IMR-90 (cell line): ENCODE measurements at regions of chr14 and their contacts with region 1.

Region 1: DNA sequence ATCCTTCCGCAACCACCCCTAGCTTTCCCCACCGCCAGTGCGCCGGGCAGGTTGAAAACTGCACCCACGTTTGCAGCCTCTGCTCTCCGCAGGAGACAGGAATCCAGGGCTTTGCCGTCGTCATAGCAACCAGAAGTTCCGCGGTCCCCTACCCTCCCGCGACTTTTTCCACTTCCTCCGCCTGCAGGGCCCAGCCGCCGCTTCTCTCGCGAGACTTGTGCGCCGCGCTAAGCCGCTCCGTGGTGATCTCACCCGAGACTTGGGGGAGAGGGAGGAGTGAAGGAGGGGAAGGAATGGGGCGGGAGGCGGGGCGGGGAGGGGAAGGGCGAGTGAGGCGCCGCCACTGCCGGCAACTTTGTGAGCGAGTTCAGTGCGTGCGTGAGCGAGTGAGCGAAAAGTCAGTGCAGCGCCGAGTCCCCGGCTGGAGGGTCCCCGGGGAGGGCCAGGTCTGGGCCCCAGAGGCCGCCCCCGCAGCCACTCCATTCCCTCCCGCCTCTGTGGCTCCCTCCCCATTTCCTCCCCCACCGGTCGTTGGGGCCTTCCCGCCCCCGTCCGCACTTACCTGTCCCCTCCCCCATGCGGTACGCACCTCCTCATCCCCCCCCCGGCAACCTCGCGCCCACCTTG is 413.0 kb downstream of the PCNX1 start:
- DNase-seq: peak; percentile 99
- ATAC-seq: peak; percentile 91
- H3K4me3 ChIP-seq: peak within 1 kb of the TSS; percentile 96
- H3K27ac ChIP-seq: peak within 1 kb of the TSS; percentile 91
- H3K4me1 ChIP-seq: peaks cover 5% of the 10 kb centered on the region
- H3K27me3 ChIP-seq: no peaks in the 10 kb centered on the region
- CTCF ChIP-seq: no peak
- POLR2A ChIP-seq: peak; percentile 94
- RAD21 ChIP-seq: peak; percentile 12

Region 2: DNA sequence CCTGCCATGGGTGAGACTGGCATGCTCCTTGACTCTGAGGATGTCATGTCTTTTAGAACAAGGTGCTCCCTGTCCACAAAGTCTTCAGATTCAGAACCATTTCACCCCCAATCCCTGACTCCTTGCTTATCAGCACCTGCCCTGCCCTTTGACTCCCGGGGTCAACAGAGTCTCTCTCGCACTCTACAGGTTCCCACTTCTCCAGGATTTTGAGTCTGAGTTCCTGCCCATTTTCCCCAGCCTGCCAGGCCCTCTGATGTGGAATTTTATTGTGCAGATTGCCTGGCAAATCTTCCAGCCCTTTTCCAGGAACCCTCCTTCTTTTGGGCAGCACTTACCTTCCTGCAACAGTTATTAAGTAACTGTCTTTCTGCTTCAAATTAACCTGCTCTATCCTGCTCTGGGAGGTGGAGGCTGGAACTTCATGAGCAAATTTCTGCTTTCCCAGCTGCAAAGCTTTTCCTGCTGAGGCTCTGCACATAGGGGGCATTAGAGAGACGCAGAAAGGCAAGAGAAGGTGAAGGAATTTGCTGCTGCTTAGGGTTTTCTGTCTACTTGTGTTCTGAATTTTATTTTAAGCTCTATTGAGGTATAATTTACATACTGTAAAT is 153.9 kb before region 1 on chr14:
- CTCF ChIA-PET with region 1: interaction called, 7 read pairs
- POLR2A ChIA-PET with region 1: interaction called, 3 read pairs
- dilution Hi-C with region 1: no loop called
- in situ Hi-C with region 1: no loop called
- intact Hi-C with region 1: loop called (anchors 1 kb)
- DNase-seq: peak; percentile 85
- ATAC-seq: peak; percentile 89
- H3K4me3 ChIP-seq: no peak overlapping the region
- H3K27ac ChIP-seq: no peak overlapping the region
- H3K4me1 ChIP-seq: peaks cover 10% of the 10 kb centered on the region
- H3K27me3 ChIP-seq: no peaks in the 10 kb centered on the region
- CTCF ChIP-seq: peak; percentile 93
- POLR2A ChIP-seq: no peak
- RAD21 ChIP-seq: peak; percentile 85

Region 3: GRCh38 chr14:71408362-71409030 is 88.3 kb after region 1 on chr14:
- CTCF ChIA-PET with region 1: interaction called, 4 read pairs
- POLR2A ChIA-PET with region 1: no interaction called
- dilution Hi-C with region 1: no loop called
- in situ Hi-C with region 1: no loop called
- intact Hi-C with region 1: loop called (anchors 5 kb)
- DNase-seq: peak; percentile 31
- ATAC-seq: peak; percentile 68
- H3K4me3 ChIP-seq: no peak overlapping the region
- H3K27ac ChIP-seq: 0 out of 2 replicates have a peak overlapping the region, but pooled peaks have one; percentile 15
- H3K4me1 ChIP-seq: peaks cover 18% of the 10 kb centered on the region
- H3K27me3 ChIP-seq: no peaks in the 10 kb centered on the region
- CTCF ChIP-seq: no peak
- POLR2A ChIP-seq: no peak
- RAD21 ChIP-seq: no peak

Region 4: DNA sequence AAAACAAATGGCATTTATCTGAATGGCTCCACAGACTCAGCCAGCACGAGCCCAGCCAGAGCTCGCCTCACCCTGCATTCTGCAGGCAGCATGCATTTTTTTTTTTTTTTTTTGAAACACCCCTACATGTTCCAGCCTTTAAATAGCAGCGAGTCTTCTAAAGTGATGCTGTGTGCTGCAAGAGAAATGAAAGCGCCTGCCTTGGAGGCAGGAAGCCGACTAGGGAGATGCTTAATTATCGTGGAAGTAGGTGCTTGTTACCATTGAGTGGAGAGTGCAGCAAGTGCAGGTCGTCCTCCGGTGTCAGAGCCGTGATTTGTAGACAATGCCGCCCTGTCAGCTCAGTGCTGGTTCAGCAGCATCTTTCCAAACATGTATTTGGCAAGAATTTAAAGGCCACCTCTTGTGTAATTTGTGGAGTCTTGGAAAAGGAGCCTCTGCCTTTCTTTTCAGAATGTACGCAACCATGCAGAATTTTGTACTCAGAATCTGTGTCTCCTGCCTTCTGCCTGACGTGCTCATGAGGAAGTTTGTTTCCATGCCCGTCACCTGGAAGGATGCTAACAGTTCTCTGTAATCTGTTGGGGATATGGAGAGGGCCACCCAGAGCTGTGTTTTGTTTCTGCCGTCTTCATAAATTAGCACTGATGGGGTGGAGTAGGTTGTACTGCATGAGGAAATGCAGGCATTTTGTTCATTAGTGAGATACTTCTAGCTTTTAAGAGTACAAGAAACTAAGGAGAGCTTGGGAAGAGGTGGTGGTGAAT is 266.1 kb after region 1 on chr14:
- CTCF ChIA-PET with region 1: no interaction called
- POLR2A ChIA-PET with region 1: no interaction called
- dilution Hi-C with region 1: no loop called
- in situ Hi-C with region 1: no loop called
- intact Hi-C with region 1: loop called (anchors 2 kb)
- DNase-seq: peak; percentile 59
- ATAC-seq: peak; percentile 49
- H3K4me3 ChIP-seq: peak overlapping the region; percentile 23
- H3K27ac ChIP-seq: peak overlapping the region; percentile 66; the same call in 1 of the 2 replicates
- H3K4me1 ChIP-seq: peaks cover 10% of the 10 kb centered on the region
- H3K27me3 ChIP-seq: no peaks in the 10 kb centered on the region
- CTCF ChIP-seq: no peak
- POLR2A ChIP-seq: no peak
- RAD21 ChIP-seq: no peak

Region 5: GRCh38 chr14:71711619-71712018 is 391.4 kb after region 1 on chr14:
- CTCF ChIA-PET with region 1: interaction called, 3 read pairs
- POLR2A ChIA-PET with region 1: no interaction called
- dilution Hi-C with region 1: no loop called
- in situ Hi-C with region 1: no loop called
- intact Hi-C with region 1: loop called (anchors 2 kb)
- DNase-seq: peak; percentile 94
- ATAC-seq: peak; percentile 83
- H3K4me3 ChIP-seq: no peak overlapping the region
- H3K27ac ChIP-seq: peak overlapping the region; percentile 94
- H3K4me1 ChIP-seq: peaks cover 23% of the 10 kb centered on the region
- H3K27me3 ChIP-seq: no peaks in the 10 kb centered on the region
- CTCF ChIP-seq: no peak
- POLR2A ChIP-seq: no peak
- RAD21 ChIP-seq: peak; percentile 11; the same call in 1 of the 2 replicates

Region 6: DNA sequence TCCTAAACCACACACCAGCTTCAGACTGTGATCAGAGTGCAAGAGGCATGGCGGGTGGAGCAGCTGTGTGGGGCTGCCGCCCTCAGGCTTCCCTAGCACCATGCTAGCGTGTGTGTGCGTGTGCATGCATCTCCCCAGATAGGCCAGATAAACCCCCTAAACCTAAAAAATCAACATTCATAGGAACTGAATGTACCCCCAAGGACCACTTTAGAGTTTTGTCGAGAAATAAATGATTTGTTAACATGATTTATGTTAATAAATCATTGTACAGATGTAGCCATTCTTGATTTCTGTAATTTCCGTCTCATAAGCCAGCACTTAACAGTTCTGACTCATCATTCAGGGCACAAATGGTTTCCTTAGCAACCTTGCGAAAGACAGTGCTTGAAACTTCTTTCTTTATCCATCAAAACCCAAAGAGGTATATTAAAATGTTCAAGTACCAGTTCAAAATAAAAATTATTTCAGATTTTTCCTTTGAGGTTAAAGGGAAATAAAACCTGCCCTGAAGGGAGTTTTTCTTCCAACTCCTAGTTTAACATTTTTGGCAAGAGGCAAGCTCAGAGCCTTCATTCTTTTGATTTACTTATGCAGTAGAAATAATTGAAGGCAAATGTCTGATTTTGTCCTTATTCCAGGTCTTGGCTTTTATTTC is 405.8 kb after region 1 on chr14:
- CTCF ChIA-PET with region 1: no interaction called
- POLR2A ChIA-PET with region 1: no interaction called
- dilution Hi-C with region 1: no loop called
- in situ Hi-C with region 1: no loop called
- intact Hi-C with region 1: no loop called
- DNase-seq: peak; percentile 86
- ATAC-seq: peak; percentile 73
- H3K4me3 ChIP-seq: no peak overlapping the region
- H3K27ac ChIP-seq: no peak overlapping the region
- H3K4me1 ChIP-seq: peaks cover 16% of the 10 kb centered on the region
- H3K27me3 ChIP-seq: no peaks in the 10 kb centered on the region
- CTCF ChIP-seq: no peak
- POLR2A ChIP-seq: no peak
- RAD21 ChIP-seq: no peak

Region 7: GRCh38 chr14:71855399-71856036 is 535.3 kb after region 1 on chr14:
- CTCF ChIA-PET with region 1: no interaction called
- POLR2A ChIA-PET with region 1: no interaction called
- dilution Hi-C with region 1: no loop called
- in situ Hi-C with region 1: no loop called
- intact Hi-C with region 1: loop called (anchors 5 kb)
- DNase-seq: peak; percentile 68
- ATAC-seq: peak; percentile 75
- H3K4me3 ChIP-seq: no peak overlapping the region
- H3K27ac ChIP-seq: no peak overlapping the region
- H3K4me1 ChIP-seq: no peaks in the 10 kb centered on the region
- H3K27me3 ChIP-seq: no peaks in the 10 kb centered on the region; the same call in 1 of the 2 replicates
- CTCF ChIP-seq: peak; percentile 84
- POLR2A ChIP-seq: no peak
- RAD21 ChIP-seq: peak; percentile 86